GM10248 (cell line): ENCODE measurements at regions of chr2 and their contacts with region 1.

Region 1: DNA sequence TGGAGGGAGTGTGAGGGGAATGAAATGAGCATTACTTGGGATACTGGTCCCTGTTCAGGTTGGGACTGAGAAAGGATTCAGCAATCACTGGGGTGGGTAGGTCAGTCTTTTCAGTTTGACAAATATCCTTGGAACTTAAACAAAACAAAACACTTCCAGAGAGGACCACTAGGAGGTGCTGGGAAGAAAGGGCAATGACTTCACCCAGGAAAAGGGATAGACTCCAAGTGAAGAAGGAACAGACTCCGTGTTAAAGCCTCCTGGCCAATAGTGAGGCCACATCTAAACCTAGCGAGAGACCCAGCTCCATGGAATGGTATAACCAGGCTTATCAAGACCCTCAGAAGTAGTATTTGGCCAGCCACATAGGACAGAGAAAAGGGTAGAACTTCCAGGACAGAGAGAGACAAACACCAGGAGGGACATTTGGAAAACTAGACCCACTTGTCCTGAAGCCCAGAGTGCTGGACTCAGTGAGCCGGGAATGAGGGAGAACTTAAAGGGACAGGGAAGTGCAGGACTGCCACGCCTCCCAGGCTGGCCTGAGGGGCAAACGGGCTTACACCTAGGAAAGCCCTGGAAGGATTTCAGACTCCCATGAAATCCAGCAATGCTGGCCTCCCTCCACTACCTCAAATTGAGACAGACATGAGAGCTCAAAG is 19.6 kb upstream of the KCNG3 start:
- DNase-seq: peak; percentile 35
- CTCF ChIP-seq: peak; percentile 60

Region 2: GRCh38 chr2:42353792-42354429 is 159.5 kb before region 1 on chr2:
- CTCF ChIA-PET with region 1: no interaction called
- POLR2A ChIA-PET with region 1: no interaction called
- DNase-seq: no peak
- CTCF ChIP-seq: no peak

Region 3: DNA sequence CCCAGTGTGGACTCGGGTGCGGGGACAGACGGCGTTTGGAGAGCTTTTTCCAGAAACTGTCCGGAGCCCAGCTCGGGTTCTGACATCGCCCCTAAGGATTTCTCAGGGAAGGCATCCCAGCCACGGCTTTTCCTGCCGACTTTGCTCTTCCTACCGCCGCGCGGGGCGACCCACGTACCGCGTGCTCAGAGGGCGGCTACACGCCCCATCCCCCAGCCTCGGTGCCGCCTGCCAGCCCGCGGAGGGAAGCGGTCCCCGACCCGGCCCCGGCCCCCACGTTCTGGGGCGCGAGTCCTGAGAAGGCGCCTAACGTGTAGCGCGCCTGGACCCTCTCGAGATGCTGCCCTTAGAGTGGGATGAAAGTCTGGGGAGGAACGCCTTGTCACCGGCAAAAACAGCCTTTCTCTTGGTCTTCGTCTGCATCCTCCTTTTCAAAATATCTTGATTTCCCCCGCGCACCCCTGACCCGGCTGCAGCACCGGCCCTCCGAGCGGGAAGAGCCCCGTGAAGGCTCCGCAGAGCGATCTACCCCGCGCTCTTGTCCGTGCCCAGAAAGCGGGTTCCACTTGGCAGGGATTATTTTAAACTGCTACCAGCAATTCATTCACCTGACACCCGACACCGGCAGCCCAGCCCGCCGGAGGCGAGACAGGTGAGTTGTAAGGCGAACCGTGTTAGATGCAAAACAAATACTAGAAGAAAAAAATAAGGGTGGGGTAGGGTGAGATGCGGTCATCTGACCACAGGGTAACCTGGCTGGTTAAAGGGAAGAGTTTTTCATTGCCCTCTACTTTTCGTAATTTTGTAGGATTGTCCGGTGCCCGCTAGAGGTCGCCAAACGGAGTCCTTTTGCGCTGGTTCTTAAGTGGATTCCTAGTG is 18.8 kb before region 1 on chr2:
- CTCF ChIA-PET with region 1: interaction called, 42 read pairs
- POLR2A ChIA-PET with region 1: no interaction called
- DNase-seq: peak; percentile 82
- CTCF ChIP-seq: peak; percentile 77